Endothelial cell of umbilical vein (primary cell): ENCODE measurements at regions of chr4 and their contacts with region 1.

Region 1: DNA sequence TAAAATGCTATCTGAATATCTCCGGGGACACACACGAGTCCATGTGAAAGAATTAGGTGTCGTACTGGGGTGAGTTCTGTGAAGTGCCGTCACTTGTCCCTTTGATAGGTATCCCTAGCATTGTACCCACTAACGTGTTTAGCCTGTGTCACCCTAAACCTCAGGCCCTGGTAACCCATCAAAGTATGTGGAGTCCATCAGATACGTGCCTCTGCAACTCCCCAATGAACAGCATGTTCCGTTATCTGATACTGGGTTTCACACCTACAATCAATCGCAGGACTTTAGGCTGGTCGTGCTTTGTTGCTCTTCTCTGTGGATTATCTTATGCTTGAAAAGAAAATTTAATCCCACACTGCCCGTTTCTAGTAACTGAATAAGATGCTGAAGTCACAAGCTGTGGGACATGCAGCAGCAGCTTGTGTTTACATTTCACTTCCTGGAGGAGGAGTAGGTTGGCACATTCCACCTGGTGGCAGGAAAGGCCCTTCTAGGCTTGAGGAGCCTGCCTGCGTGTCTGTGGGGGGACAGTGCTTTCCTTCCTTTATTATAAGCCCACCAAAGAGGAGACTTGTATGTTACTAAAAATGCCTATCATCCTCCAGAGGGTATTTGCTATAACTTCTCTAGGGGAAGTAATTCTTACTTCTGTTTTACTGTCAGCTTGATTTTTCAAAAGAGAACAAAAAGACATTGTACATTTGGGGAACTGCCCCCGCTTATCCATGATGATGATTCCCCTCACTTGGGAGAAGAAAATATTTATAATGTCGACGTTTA is 127.2 kb downstream of the FNIP2 start:
- DNase-seq: peak; percentile 49
- H3K4me3 ChIP-seq: peak overlapping the region in 1 of 3 experiments; percentile 1
- H3K27ac ChIP-seq: peak overlapping the region; percentile 56
- H3K4me1 ChIP-seq: peaks cover 11% of the 10 kb centered on the region
- H3K27me3 ChIP-seq: no peaks in the 10 kb centered on the region
- CTCF ChIP-seq: peak in 1 of 2 donors; percentile 15
- POLR2A ChIP-seq: no peak

Region 2: DNA sequence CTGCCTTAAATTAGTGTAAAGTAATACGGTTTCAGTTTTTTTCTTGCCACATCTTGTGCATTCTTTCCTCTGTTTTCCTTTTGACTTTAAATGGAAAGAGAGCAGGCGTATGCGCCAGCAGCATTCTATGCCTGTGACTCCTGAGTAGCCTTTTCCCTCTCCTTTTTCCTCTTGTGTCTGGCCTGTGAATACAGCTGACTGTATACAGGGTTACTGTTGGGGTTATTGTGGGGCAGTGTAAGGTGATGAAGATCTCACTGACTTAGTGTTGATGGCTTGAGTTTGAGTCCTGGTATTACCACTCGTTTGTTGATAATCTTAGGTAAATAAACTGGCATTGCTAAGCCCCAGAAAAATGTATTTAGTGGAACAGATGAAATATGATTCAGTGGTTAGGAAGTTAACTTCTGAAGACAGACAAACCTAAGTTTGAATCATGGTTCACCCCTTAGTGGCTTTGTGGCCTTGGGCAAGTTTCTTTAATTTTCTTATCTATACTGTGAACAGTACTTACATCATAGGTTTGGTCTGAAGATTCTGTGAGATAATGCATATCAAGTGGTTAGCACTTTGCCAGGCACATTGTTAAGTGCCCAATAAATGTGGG is 22.1 kb before region 1 on chr4:
- CTCF ChIA-PET with region 1: interaction called, 7 read pairs
- POLR2A ChIA-PET with region 1: no interaction called
- dilution Hi-C with region 1: no loop called
- intact Hi-C with region 1: loop called (anchors 1 kb)
- DNase-seq: peak; percentile 81
- H3K4me3 ChIP-seq: no peak overlapping the region
- H3K27ac ChIP-seq: peak overlapping the region; percentile 56
- H3K4me1 ChIP-seq: peaks cover 15% of the 10 kb centered on the region
- H3K27me3 ChIP-seq: no peaks in the 10 kb centered on the region
- CTCF ChIP-seq: no peak
- POLR2A ChIP-seq: no peak

Region 3: DNA sequence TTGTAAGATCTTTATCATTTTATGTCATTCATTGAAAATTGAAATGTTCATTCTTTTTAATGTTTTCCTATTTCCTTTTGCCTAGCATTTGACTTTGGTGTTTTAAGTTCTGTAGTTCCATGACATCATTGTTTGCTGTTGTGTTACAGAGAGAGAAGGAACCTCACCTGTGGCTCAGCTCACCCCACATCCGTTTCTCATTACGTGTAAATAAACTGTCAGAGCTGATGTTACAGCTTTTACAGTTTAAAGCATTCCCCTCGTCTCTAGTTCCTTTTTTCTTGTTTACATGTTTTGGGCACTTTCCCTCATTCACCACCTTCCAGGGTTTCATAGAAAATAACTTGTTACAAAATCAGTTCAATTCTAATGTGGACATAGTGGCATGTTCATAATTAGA is 10.1 kb after region 1 on chr4:
- CTCF ChIA-PET with region 1: interaction called, 11 read pairs
- POLR2A ChIA-PET with region 1: no interaction called
- dilution Hi-C with region 1: no loop called
- intact Hi-C with region 1: no loop called
- DNase-seq: no peak
- H3K4me3 ChIP-seq: no peak overlapping the region
- H3K27ac ChIP-seq: no peak overlapping the region
- H3K4me1 ChIP-seq: no peaks in the 10 kb centered on the region
- H3K27me3 ChIP-seq: no peaks in the 10 kb centered on the region
- CTCF ChIP-seq: no peak
- POLR2A ChIP-seq: no peak

Region 4: DNA sequence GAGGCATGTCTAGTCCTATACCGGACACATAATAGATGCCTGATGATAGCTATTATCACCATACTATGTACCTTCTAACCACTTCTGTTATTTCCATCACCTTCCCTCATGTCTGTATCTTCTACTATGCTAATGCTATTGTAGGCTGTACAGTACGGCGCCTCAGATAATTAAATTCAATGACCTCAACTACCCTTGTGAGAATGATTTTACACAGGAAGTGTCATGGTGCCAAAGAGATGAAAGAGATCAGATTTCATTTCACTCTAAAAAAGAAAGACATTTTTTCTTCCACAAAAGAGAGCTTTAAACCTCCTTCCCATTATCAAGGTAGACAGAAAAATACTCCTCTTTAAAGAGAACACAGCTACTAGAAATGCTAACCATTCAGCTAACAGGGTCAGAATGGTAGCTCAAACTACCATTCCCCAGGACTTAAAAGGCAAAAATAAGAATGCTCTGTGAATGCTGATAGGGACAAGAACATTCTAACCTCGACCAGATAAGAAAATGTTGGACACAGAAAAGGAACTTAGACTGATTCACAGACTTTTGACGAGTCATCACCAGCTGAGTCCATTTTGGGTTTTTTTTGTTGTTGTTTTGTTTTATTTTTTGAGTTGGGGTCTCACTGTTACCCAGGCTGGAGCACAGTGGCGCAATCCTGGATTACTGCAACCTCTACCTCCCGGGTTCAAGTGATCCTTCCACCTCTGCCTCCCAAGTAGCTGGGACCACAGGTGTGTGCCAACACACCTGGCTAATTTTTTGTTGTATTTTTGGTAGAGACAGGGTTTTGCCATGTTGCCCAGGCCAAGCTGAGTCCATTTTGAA is 107.7 kb after region 1 on chr4:
- CTCF ChIA-PET with region 1: no interaction called
- POLR2A ChIA-PET with region 1: no interaction called
- dilution Hi-C with region 1: no loop called
- intact Hi-C with region 1: loop called (anchors 5 kb)
- DNase-seq: peak; percentile 81
- H3K4me3 ChIP-seq: peak overlapping the region in 1 of 3 experiments; percentile 49
- H3K27ac ChIP-seq: peak overlapping the region; percentile 94
- H3K4me1 ChIP-seq: peaks cover 21% of the 10 kb centered on the region
- H3K27me3 ChIP-seq: no peaks in the 10 kb centered on the region
- CTCF ChIP-seq: no peak
- POLR2A ChIP-seq: no peak